B cell (primary cell): ENCODE measurements at regions of chr19 and their contacts with region 1.

Region 1: DNA sequence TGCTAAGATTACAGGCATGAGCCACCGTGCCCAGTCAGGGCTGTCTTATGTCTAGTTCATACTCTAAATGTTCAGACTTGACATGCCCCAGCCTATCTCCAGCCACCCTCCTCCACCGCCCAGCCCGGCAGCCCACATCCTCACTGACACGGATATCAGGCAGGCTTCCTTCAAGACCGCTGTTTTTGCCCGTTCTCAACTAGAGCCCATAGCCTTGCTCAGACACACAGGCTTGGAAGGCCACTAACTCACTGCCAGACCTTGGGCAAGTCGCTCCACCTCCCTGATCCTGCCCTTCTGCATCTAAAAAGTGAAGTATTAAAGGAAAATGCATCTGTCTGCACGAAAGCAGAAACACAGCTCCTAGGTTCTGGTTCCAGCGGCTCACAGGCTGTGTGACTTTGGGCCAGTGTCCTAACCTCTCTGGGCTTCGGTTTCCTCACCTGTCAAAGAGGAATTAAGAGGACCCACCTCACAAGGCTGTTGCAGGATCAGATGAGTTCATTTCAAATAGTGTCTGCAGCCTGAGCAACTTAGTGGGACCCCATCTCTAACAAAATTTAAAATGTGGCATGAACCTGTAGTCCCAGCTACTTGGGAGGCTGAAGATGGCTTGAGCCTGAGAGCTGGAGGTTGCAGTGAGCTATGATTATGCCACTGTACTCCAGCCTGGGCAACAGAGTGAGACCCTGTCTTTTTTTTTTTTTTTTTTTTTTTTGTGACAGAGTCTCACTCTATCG is 14.5 kb upstream of the CERS4 start:
- DNase-seq: peak; percentile 82
- ATAC-seq: peak; percentile 19
- H3K4me3 ChIP-seq: peak overlapping the region; percentile 18 to 53 (median 38)
- H3K4me3 Mint-ChIP-seq: peak overlapping the region; percentile 87
- H3K27ac ChIP-seq: peak overlapping the region; percentile 93 to 96
- H3K27ac Mint-ChIP-seq: peak overlapping the region; percentile 97
- H3K4me1 ChIP-seq: peaks cover 57 to 67% of the 10 kb centered on the region in 2 donors
- H3K4me1 Mint-ChIP-seq: peaks cover 60% of the 10 kb centered on the region
- H3K27me3 ChIP-seq: no peaks in the 10 kb centered on the region
- H3K27me3 Mint-ChIP-seq: no peaks in the 10 kb centered on the region
- CTCF ChIP-seq: no peak

Region 2: DNA sequence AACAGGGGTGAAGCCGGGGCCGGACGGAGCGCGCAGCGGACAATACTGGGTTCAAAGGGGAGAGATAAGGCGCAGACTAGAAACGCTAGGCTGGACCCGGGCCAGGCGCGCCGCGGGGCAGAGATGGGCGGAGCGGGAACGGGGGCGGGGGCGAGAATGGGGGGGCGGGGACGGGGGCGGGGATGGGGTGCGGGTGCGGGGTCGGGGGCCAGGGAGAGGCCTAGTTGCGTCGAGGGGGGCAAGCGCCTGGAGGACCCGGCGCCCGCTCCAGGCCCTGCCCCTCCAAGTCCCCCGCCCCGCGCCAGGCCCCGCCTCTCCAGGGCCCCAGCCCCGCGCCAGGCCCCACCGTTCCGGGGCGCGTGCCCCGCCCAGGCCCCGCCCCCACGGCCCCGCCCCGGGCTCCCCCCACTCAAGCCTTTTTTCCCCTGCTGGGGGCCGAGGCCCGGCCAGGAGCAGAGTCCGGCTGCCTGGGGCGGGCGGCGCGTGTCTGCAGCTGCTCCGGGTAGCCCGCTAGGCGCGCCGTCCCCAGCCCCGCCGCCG is 14.3 kb after region 1 on chr19 and contains the start of gene CERS4:
- CTCF ChIA-PET with region 1: interaction called, 27 read pairs
- POLR2A ChIA-PET with region 1: interaction called, 71 read pairs
- intact Hi-C with region 1: loop called (anchors 1 kb)
- DNase-seq: no peak
- ATAC-seq: peak; percentile 85
- H3K4me3 ChIP-seq: peak within 1 kb of the TSS; percentile 48 to 96 (median 93)
- H3K4me3 Mint-ChIP-seq: peak within 1 kb of the TSS; percentile 94
- H3K27ac ChIP-seq: peak within 1 kb of the TSS; percentile 87 to 98
- H3K27ac Mint-ChIP-seq: peak within 1 kb of the TSS; percentile 93
- H3K4me1 ChIP-seq: peaks cover 29 to 37% of the 10 kb centered on the region in 2 donors
- H3K4me1 Mint-ChIP-seq: peaks cover 41% of the 10 kb centered on the region
- H3K27me3 ChIP-seq: no peaks in the 10 kb centered on the region
- H3K27me3 Mint-ChIP-seq: no peaks in the 10 kb centered on the region
- CTCF ChIP-seq: no peak
- total RNA-seq, gene CERS4: 125 and 146 TPM in 2 replicates

Region 3: GRCh38 chr19:8240274-8241229 is 45.9 kb after region 1 on chr19:
- CTCF ChIA-PET with region 1: interaction called, 4 read pairs
- POLR2A ChIA-PET with region 1: interaction called, 5 read pairs
- intact Hi-C with region 1: loop called (anchors 5 kb)
- DNase-seq: peak; percentile 67
- ATAC-seq: peak; percentile 81
- H3K4me3 ChIP-seq: peak overlapping the region in 1 of 5 experiments; percentile 9
- H3K4me3 Mint-ChIP-seq: peak overlapping the region; percentile 73
- H3K27ac ChIP-seq: peak overlapping the region in 1 of 2 donors; percentile 21
- H3K27ac Mint-ChIP-seq: peak overlapping the region; percentile 77
- H3K4me1 ChIP-seq: peaks cover 20 to 29% of the 10 kb centered on the region in 2 donors
- H3K4me1 Mint-ChIP-seq: peaks cover 52% of the 10 kb centered on the region
- H3K27me3 ChIP-seq: no peaks in the 10 kb centered on the region
- H3K27me3 Mint-ChIP-seq: no peaks in the 10 kb centered on the region
- CTCF ChIP-seq: no peak

Region 4: GRCh38 chr19:8252922-8253589 is 58.4 kb after region 1 on chr19:
- CTCF ChIA-PET with region 1: interaction called, 4 read pairs
- POLR2A ChIA-PET with region 1: interaction called, 3 read pairs
- intact Hi-C with region 1: loop called (anchors 2 kb)
- DNase-seq: peak; percentile 87
- ATAC-seq: peak; percentile 95
- H3K4me3 ChIP-seq: no peak overlapping the region
- H3K4me3 Mint-ChIP-seq: no peak overlapping the region
- H3K27ac ChIP-seq: peak overlapping the region in 1 of 2 donors; percentile 28
- H3K27ac Mint-ChIP-seq: no peak overlapping the region
- H3K4me1 ChIP-seq: peaks cover 5 to 7% of the 10 kb centered on the region in 2 donors
- H3K4me1 Mint-ChIP-seq: peaks cover 8% of the 10 kb centered on the region
- H3K27me3 ChIP-seq: no peaks in the 10 kb centered on the region
- H3K27me3 Mint-ChIP-seq: no peaks in the 10 kb centered on the region
- CTCF ChIP-seq: peak; percentile 98